Activated T-helper 2 cell treated with anti-CD3 and anti-CD28 coated beads, Interferon-gamma antibody, Interleukin-2, Interleukin-4, amounts not matched to agents 10 μg/mL and 5 μg/mL and 100 μg/mL, durations not matched to agents 14 hours and 24 hours and 36 hours (primary cell): ENCODE measurements at regions of chr1 and their contacts with region 1.

Region 1: GRCh38 chr1:148334339-148335130 is 148.6 kb downstream of the PPIAL4G start:
- DNase-seq: peak; percentile 73
- H3K4me3 Mint-ChIP-seq: peak overlapping the region; percentile 94
- H3K27ac Mint-ChIP-seq: peak overlapping the region; percentile 99
- H3K4me1 Mint-ChIP-seq: peaks cover 32% of the 10 kb centered on the region
- H3K27me3 Mint-ChIP-seq: peaks cover 23% of the 10 kb centered on the region

Region 2: DNA sequence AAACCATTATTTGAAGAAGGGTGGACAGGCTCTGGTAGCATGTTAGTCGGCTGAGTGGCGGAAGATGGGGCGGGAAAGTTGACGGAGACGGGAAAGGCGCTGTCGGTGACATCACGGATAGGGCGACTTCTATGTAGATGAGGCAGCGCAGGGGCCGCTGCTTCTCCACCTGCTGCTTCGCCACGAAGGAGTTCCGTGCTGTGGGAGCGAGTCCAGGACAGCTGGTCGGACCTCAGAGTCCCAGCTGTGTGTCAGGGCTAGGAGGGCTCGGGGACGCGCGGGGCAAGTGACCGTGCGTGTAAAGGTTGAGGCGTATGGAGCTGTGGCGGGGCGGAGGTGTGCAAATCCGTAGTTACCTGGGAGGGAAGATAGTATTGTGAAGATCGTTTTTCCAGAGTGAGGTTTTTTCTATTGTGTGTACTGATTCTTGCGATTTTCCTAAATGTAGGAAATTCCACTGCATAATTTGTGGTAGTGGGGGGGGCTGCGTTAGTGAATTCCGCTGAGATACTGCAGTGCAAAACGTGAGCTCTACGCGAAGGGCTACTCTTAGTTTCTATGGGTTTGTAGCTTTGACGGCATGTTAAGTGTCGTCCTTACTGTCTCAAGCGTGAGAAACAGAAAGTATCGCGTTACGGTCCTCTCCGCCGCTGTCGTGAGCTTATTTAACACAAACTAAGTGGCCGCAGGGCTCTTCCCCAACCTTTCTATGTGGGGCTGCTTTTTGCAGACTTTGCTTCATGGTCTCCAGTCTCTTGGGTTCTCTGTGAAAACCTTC is 71.2 kb before region 1 on chr1:
- intact Hi-C with region 1: loop called (anchors 1 kb)
- DNase-seq: peak; percentile 48
- H3K4me3 Mint-ChIP-seq: peak overlapping the region; percentile 87
- H3K27ac Mint-ChIP-seq: peak overlapping the region; percentile 88
- H3K4me1 Mint-ChIP-seq: peaks cover 16% of the 10 kb centered on the region
- H3K27me3 Mint-ChIP-seq: peaks cover 38% of the 10 kb centered on the region

Region 3: GRCh38 chr1:148290881-148291280 is 43.7 kb before region 1 on chr1:
- intact Hi-C with region 1: no loop called
- DNase-seq: no peak
- H3K4me3 Mint-ChIP-seq: no peak overlapping the region
- H3K27ac Mint-ChIP-seq: no peak overlapping the region
- H3K4me1 Mint-ChIP-seq: no peaks in the 10 kb centered on the region
- H3K27me3 Mint-ChIP-seq: peaks cover 19% of the 10 kb centered on the region

Region 4: DNA sequence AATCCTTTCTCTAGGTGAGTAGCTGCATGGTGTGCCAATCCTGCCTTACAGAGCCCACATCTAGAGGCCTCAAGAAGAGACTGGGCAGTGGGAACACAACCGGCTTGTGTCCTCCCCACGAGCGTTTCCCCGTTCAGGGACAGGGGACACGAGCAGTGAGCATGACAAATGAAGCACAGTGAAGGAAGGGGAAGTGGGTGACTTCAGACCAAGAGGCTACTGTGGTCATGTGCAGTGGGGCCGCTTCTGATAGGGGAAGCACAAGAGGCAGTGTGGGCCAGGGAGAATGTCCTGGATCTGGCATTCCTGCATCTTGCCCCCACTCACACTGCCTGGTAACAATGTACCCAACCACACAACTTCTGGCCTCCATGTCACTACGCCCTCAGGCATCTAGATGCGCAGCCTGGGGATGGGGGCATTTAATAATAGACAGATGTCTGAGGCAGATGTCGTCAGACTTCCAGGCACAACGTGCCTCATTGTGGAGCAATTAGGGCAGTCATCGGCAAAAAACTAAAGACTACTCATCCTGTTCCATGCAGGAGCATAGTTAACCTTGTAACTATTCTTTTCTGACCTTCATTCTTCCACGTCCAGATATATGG is 26.8 kb before region 1 on chr1:
- intact Hi-C with region 1: loop called (anchors 2 kb)
- DNase-seq: no peak
- H3K4me3 Mint-ChIP-seq: no peak overlapping the region
- H3K27ac Mint-ChIP-seq: no peak overlapping the region
- H3K4me1 Mint-ChIP-seq: peaks cover 28% of the 10 kb centered on the region
- H3K27me3 Mint-ChIP-seq: peaks cover 28% of the 10 kb centered on the region

Region 5: GRCh38 chr1:148318123-148318903 is 16.2 kb before region 1 on chr1:
- intact Hi-C with region 1: loop called (anchors 1 kb)
- DNase-seq: peak; percentile 75
- H3K4me3 Mint-ChIP-seq: peak overlapping the region; percentile 89
- H3K27ac Mint-ChIP-seq: peak overlapping the region; percentile 90
- H3K4me1 Mint-ChIP-seq: peaks cover 44% of the 10 kb centered on the region
- H3K27me3 Mint-ChIP-seq: peaks cover 11% of the 10 kb centered on the region

Region 6: GRCh38 chr1:148362626-148363438 is 28.3 kb after region 1 on chr1:
- intact Hi-C with region 1: no loop called
- DNase-seq: no peak
- H3K4me3 Mint-ChIP-seq: peak overlapping the region; percentile 77
- H3K27ac Mint-ChIP-seq: no peak overlapping the region
- H3K4me1 Mint-ChIP-seq: peaks cover 45% of the 10 kb centered on the region
- H3K27me3 Mint-ChIP-seq: peaks cover 13% of the 10 kb centered on the region